Right lobe of liver (tissue), 6 donors: ENCODE measurements at regions of chr1 and their contacts with region 1.

Region 1: GRCh38 chr1:44826375-44827196 is 16.5 kb downstream of the PTCH2 start:
- DNase-seq: peak in 2 of 3 donors; percentile 68 to 77
- ATAC-seq: peak; percentile 63 to 84 (median 74)
- H3K4me3 ChIP-seq: no peak overlapping the region
- H3K27ac ChIP-seq: peak overlapping the region in 1 of 3 donors; percentile 28
- H3K4me1 ChIP-seq: no peaks in the 10 kb centered on the region
- H3K27me3 ChIP-seq: no peaks in the 10 kb centered on the region
- CTCF ChIP-seq: no peak
- POLR2A ChIP-seq: no peak

Region 2: DNA sequence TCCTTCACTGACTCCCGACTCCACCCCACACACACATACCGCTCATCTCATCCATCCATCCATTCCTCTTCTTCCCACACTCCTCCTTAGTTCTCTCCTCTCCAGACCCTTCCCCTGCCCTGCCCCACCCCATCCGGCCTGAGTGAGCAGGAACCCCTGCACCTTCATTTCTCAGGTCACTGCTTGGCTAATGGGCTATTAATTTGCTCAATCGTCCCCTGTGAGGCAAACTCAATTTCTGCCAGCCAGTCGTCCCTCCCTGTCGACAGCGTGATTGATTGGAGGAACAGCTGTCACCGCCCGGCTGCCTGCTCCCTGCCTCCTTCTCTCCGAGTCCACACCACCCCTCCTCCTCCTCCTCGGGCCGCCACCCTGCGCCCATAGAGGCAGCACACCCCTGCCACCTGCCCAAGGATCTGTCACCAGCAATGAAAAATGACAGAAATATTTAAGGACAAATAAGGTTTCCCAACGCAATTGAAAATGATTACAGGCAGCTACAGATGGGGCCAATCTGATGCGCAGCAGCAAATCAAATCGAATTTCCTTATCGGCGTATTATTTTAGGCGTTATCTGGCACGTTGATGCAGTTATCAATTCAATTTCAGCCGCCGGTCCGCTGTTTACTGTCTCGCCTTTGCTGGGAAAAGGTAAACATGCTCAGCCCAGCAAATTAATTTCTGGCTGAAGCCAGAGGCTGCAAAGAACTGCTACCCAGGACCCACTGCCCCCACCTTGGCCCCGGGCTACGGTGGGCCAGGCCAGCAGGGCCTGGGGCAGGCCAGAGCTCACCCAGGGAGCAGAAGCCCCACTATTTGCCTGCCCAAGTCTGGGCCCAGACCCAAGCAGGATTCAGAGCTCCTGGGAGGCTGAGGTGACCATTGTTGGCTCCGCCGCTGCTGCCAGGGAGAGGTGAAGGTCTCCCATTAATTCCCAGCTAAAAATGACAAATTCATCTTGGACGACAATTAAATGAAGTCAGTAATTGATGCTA is 223.7 kb before region 1 on chr1:
- intact Hi-C with region 1: no loop called
- DNase-seq: no peak
- ATAC-seq: no peak
- H3K4me3 ChIP-seq: no peak overlapping the region
- H3K27ac ChIP-seq: no peak overlapping the region
- H3K4me1 ChIP-seq: no peaks in the 10 kb centered on the region
- H3K27me3 ChIP-seq: no peaks in the 10 kb centered on the region
- CTCF ChIP-seq: no peak
- POLR2A ChIP-seq: no peak

Region 3: DNA sequence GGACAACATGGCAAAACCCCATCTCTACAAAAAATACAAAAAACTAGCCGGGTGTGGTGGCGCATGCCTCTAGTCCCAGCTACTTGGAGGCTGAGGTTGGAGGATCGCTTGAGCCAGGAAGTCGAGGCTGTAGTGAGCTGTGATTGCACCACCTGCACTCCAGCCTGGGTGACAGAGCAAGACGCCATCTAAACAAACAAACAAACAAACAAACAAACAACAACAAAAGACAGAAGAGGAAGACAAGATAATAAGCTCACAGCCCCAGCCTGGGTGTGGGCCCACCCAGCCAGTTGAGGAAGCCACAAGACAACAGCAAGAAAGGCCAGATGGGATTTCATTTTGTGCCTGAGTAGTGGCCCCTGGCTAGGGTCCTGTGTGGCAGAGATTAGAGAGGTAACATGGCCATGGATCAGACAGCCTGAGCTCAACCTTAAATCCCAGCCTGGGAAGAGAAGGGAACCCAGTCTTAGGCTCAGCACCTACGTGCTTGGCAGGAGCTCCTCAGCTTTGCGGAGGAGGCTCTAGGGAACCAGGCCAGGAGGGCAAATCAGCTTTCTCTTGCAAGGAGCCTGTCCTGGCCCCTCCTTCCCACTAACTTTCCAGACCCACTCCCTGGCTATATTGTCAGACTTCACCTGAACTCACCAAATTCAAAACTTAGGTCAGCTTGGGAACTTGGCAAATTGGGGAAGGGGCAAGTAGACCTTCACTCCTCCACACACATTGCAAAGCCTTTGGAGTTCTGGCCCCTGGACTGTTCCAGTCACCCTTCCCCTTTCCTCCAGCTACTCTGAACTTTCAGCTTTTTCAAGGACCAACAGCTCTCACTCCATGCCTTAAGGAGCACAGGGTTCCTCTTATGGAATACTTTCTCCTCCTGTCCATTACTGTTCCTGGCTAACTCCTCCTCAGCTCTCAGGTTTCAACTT is 33.5 kb before region 1 on chr1:
- intact Hi-C with region 1: loop called (anchors 5 to 10 kb)
- DNase-seq: no peak
- ATAC-seq: peak in 3 of 4 donors; percentile 6 to 15 (median 9)
- H3K4me3 ChIP-seq: no peak overlapping the region
- H3K27ac ChIP-seq: no peak overlapping the region
- H3K4me1 ChIP-seq: no peaks in the 10 kb centered on the region
- H3K27me3 ChIP-seq: no peaks in the 10 kb centered on the region
- CTCF ChIP-seq: no peak
- POLR2A ChIP-seq: no peak

Region 4: DNA sequence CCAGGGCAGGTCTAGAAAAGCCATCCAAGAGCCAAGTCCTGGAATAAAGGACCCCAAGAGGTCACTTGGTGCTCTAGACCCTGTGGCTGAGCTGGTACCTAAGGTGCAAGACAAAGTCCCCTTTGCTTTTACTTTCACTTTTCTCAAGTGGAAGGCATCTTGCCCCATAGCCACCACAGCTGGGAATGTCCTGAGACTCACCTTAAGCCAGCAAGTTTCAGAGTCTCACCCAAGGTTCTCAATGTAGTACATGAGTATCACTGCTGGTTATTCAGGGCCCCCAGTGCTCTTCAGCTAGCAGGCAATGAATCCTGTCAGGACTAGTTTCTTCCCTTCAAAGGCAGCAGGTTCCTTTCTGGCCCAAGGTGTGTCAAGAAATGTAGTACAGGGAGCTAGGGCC is 252.9 kb after region 1 on chr1:
- intact Hi-C with region 1: no loop called
- DNase-seq: no peak
- ATAC-seq: no peak
- H3K4me3 ChIP-seq: no peak overlapping the region
- H3K27ac ChIP-seq: no peak overlapping the region
- H3K4me1 ChIP-seq: no peaks in the 10 kb centered on the region
- H3K27me3 ChIP-seq: no peaks in the 10 kb centered on the region
- CTCF ChIP-seq: no peak
- POLR2A ChIP-seq: no peak